GM12878 (cell line): ENCODE measurements at regions of chr1 and their contacts with region 1.

Region 1: GRCh38 chr1:199463521-199464128 is 563.9 kb upstream of the NR5A2 start:
- DNase-seq: peak; percentile 24
- ATAC-seq: peak; percentile 98
- H3K4me3 ChIP-seq: no peak overlapping the region
- H3K27ac ChIP-seq: no peak overlapping the region
- H3K4me1 ChIP-seq: no peaks in the 10 kb centered on the region
- H3K27me3 ChIP-seq: no peaks in the 10 kb centered on the region
- CTCF ChIP-seq: peak; percentile 55 to 67 (median 57)
- EP300 ChIP-seq: no peak
- POLR2A ChIP-seq: no peak
- RAD21 ChIP-seq: peak; percentile 86

Region 2: GRCh38 chr1:198756470-198756869 is 707.2 kb before region 1 on chr1:
- CTCF ChIA-PET with region 1: interaction called, 11 read pairs
- POLR2A ChIA-PET with region 1: no interaction called
- RAD21 ChIA-PET with region 1: interaction called, 9 read pairs
- SMC1A ChIA-PET with region 1: interaction called, 5 read pairs
- in situ Hi-C with region 1: loop called (anchors 25 kb)
- intact Hi-C with region 1: no loop called
- DNase-seq: no peak
- ATAC-seq: peak; percentile 58; the same call in 2 of the 3 replicates
- H3K4me3 ChIP-seq: no peak overlapping the region
- H3K27ac ChIP-seq: no peak overlapping the region
- H3K4me1 ChIP-seq: no peaks in the 10 kb centered on the region
- H3K27me3 ChIP-seq: no peaks in the 10 kb centered on the region
- CTCF ChIP-seq: peak in 1 of 3 experiments; percentile 5; a peak in 1 of 6 replicates
- EP300 ChIP-seq: no peak
- POLR2A ChIP-seq: no peak
- RAD21 ChIP-seq: no peak

Region 3: GRCh38 chr1:198771563-198772153 is 692.0 kb before region 1 on chr1:
- CTCF ChIA-PET with region 1: interaction called, 34 read pairs
- POLR2A ChIA-PET with region 1: no interaction called
- RAD21 ChIA-PET with region 1: interaction called, 10 read pairs
- SMC1A ChIA-PET with region 1: interaction called, 15 read pairs
- in situ Hi-C with region 1: loop called (anchors 25 kb)
- intact Hi-C with region 1: loop called (anchors 1 kb)
- DNase-seq: peak; percentile 20
- ATAC-seq: peak; percentile 70
- H3K4me3 ChIP-seq: no peak overlapping the region
- H3K27ac ChIP-seq: no peak overlapping the region
- H3K4me1 ChIP-seq: no peaks in the 10 kb centered on the region
- H3K27me3 ChIP-seq: no peaks in the 10 kb centered on the region
- CTCF ChIP-seq: peak; percentile 35 to 61 (median 41); a peak in 5 of 6 replicates
- EP300 ChIP-seq: no peak
- POLR2A ChIP-seq: no peak
- RAD21 ChIP-seq: peak; percentile 98

Region 4: GRCh38 chr1:198880818-198881597 is 582.6 kb before region 1 on chr1:
- CTCF ChIA-PET with region 1: interaction called, 3 read pairs
- POLR2A ChIA-PET with region 1: no interaction called
- RAD21 ChIA-PET with region 1: no interaction called
- SMC1A ChIA-PET with region 1: interaction called, 3 read pairs
- in situ Hi-C with region 1: no loop called
- intact Hi-C with region 1: loop called (anchors 10 kb)
- DNase-seq: no peak
- ATAC-seq: peak; percentile 60
- H3K4me3 ChIP-seq: no peak overlapping the region
- H3K27ac ChIP-seq: no peak overlapping the region
- H3K4me1 ChIP-seq: no peaks in the 10 kb centered on the region
- H3K27me3 ChIP-seq: no peaks in the 10 kb centered on the region
- CTCF ChIP-seq: no peak
- EP300 ChIP-seq: no peak
- POLR2A ChIP-seq: no peak
- RAD21 ChIP-seq: no peak

Region 5: DNA sequence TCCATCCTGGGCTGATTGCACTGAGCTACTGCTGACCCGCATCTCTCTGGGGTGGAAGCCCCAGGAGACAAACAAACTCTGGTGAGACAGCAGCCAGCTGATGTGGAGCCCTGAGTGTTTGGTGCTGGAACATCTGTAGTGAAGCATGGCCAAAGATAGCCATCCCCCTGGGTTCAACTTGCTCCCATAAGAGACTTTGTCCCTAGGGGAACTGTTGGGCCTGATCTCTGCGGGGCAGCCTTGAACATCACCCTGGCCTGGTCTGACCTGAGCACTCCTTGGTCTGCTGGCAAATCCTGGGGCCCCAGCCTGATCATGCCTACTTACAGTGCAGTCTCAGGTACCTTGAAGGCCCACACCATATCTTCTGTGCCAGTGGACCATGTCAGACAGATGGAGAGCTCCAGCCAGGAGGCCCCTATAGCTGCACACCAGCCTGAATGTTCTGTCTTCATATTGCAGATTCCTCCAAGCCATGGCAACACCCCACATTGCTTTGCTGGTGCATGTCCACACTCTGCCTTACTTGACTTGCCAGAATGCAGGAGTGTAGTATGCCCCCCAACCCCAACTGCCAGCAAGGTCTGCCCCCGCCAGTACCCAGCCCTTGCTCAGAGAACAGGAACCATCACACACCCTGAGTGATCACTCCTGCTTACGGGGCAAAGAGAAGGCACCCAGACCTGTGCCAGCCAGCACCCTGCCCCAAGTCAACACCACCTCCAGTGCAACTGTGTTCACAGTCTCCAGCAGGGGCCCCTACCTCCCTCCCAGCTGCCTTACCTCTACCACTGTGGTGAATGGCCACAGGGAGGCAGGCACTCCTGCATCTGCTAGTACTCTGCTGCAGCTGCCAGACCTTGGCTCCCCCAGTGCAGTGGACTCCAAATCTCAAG is 126.6 kb before region 1 on chr1:
- CTCF ChIA-PET with region 1: interaction called, 6 read pairs
- POLR2A ChIA-PET with region 1: no interaction called
- RAD21 ChIA-PET with region 1: interaction called, 3 read pairs
- SMC1A ChIA-PET with region 1: interaction called, 11 read pairs
- in situ Hi-C with region 1: no loop called
- intact Hi-C with region 1: no loop called
- DNase-seq: no peak
- ATAC-seq: peak; percentile 84
- H3K4me3 ChIP-seq: no peak overlapping the region
- H3K27ac ChIP-seq: no peak overlapping the region
- H3K4me1 ChIP-seq: no peaks in the 10 kb centered on the region
- H3K27me3 ChIP-seq: no peaks in the 10 kb centered on the region; a peak in 1 of 4 replicates
- CTCF ChIP-seq: peak in 1 of 3 experiments; percentile 21; a peak in 2 of 6 replicates
- EP300 ChIP-seq: no peak
- POLR2A ChIP-seq: no peak
- RAD21 ChIP-seq: peak; percentile 38; the same call in 1 of the 2 replicates

Region 6: DNA sequence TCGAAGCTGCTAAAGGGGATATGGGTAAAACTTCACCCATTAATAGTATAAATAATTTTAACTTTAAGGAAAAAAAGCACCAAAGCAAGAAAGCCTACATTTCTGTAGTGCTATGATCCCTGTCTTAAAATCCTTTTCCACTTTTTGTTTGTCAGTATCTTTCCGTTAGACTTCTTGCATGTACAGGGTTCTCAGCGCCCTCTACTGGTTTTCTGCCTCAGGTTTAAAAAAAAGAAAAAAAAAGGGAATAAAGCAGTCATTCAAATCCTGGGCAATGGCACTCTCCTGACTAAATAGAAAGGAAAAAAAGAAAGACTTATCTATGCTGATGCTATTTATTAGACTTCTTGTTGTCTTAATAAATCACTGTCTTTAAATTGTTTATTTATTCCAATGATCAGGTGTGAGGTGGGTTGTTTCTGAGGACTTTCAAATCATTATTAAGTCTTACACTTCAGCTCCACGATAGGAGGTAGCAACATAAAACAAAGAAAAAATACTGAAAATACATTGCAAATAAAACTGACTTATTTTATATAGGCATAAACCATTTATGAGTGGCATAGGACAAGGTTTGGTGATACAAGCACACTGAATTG is 88.4 kb after region 1 on chr1:
- CTCF ChIA-PET with region 1: interaction called, 3 read pairs
- POLR2A ChIA-PET with region 1: no interaction called
- RAD21 ChIA-PET with region 1: no interaction called
- SMC1A ChIA-PET with region 1: interaction called, 5 read pairs
- in situ Hi-C with region 1: no loop called
- intact Hi-C with region 1: loop called (anchors 5 kb)
- DNase-seq: no peak
- ATAC-seq: peak; percentile 63
- H3K4me3 ChIP-seq: no peak overlapping the region
- H3K27ac ChIP-seq: no peak overlapping the region
- H3K4me1 ChIP-seq: no peaks in the 10 kb centered on the region
- H3K27me3 ChIP-seq: no peaks in the 10 kb centered on the region
- CTCF ChIP-seq: peak; percentile 64 to 68 (median 67)
- EP300 ChIP-seq: no peak
- POLR2A ChIP-seq: no peak
- RAD21 ChIP-seq: peak; percentile 94